PC-3 (cell line): ENCODE measurements at regions of chr11 and their contacts with region 1.

Region 1: GRCh38 chr11:108929241-108929640 is 264.4 kb downstream of the DDX10 start:
- DNase-seq: peak; percentile 97
- ATAC-seq: peak; percentile 76
- H3K4me3 ChIP-seq: no peak overlapping the region
- H3K27ac ChIP-seq: peak overlapping the region; percentile 93
- H3K4me1 ChIP-seq: peaks cover 51% of the 10 kb centered on the region
- H3K27me3 ChIP-seq: no peaks in the 10 kb centered on the region
- CTCF ChIP-seq: no peak

Region 2: DNA sequence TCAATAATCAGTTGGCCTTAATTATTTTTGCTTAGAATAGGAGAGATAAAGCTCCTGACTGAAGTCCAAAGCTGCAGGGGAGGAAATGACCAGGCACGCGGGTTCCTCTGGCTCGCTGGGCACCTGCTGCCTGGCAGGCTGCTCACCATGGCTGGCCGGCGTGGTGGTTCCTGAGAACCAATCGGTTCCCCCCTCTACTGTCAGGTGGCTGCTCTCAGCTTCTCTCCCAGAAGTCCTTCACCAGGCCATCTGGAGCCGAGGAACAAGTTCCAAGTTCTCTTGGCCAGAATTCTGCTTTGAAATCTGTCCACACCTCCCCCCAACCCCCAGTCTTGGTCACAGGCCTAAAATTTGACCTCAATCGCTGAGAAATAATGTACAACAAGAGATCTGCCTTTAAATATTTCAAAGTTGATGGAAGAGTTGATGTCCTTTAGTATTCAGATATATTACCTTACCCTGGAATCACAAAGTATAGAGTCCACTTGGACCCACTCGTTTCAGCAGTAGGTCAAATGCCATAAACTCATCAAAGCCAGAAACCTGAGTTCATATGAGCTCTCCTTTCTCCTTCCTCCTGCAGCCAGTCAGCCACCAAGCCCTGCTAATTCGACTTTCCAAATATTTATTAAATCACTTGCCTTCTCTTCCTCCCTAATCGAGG is 360.9 kb before region 1 on chr11:
- CTCF ChIA-PET with region 1: no interaction called
- POLR2A ChIA-PET with region 1: no interaction called
- intact Hi-C with region 1: no loop called
- DNase-seq: no peak
- ATAC-seq: no peak
- H3K4me3 ChIP-seq: no peak overlapping the region
- H3K27ac ChIP-seq: no peak overlapping the region
- H3K4me1 ChIP-seq: peaks cover 23% of the 10 kb centered on the region
- H3K27me3 ChIP-seq: no peaks in the 10 kb centered on the region
- CTCF ChIP-seq: no peak

Region 3: GRCh38 chr11:108580043-108580442 is 349.2 kb before region 1 on chr11:
- CTCF ChIA-PET with region 1: no interaction called
- POLR2A ChIA-PET with region 1: no interaction called
- intact Hi-C with region 1: no loop called
- DNase-seq: no peak
- ATAC-seq: no peak
- H3K4me3 ChIP-seq: no peak overlapping the region
- H3K27ac ChIP-seq: no peak overlapping the region
- H3K4me1 ChIP-seq: peaks cover 22% of the 10 kb centered on the region
- H3K27me3 ChIP-seq: no peaks in the 10 kb centered on the region
- CTCF ChIP-seq: no peak

Region 4: GRCh38 chr11:108846009-108846408 is 83.2 kb before region 1 on chr11:
- CTCF ChIA-PET with region 1: no interaction called
- POLR2A ChIA-PET with region 1: no interaction called
- intact Hi-C with region 1: no loop called
- DNase-seq: no peak
- ATAC-seq: no peak
- H3K4me3 ChIP-seq: no peak overlapping the region
- H3K27ac ChIP-seq: no peak overlapping the region
- H3K4me1 ChIP-seq: no peaks in the 10 kb centered on the region
- H3K27me3 ChIP-seq: no peaks in the 10 kb centered on the region
- CTCF ChIP-seq: no peak

Region 5: GRCh38 chr11:108906329-108906728 is 22.9 kb before region 1 on chr11:
- CTCF ChIA-PET with region 1: no interaction called
- POLR2A ChIA-PET with region 1: no interaction called
- intact Hi-C with region 1: loop called (anchors 1 kb)
- DNase-seq: peak; percentile 87
- ATAC-seq: peak; percentile 98
- H3K4me3 ChIP-seq: no peak overlapping the region
- H3K27ac ChIP-seq: peak overlapping the region; percentile 76
- H3K4me1 ChIP-seq: peaks cover 23% of the 10 kb centered on the region
- H3K27me3 ChIP-seq: no peaks in the 10 kb centered on the region
- CTCF ChIP-seq: no peak

Region 6: GRCh38 chr11:108973402-108974162 is 44.3 kb after region 1 on chr11:
- CTCF ChIA-PET with region 1: no interaction called
- POLR2A ChIA-PET with region 1: no interaction called
- intact Hi-C with region 1: loop called (anchors 1 kb)
- DNase-seq: peak; percentile 96
- ATAC-seq: peak; percentile 91
- H3K4me3 ChIP-seq: no peak overlapping the region
- H3K27ac ChIP-seq: peak overlapping the region; percentile 61
- H3K4me1 ChIP-seq: peaks cover 22% of the 10 kb centered on the region
- H3K27me3 ChIP-seq: no peaks in the 10 kb centered on the region
- CTCF ChIP-seq: no peak